Activated CD4-positive, alpha-beta T cell treated with anti-CD3 and anti-CD28 coated beads, Interleukin-2, amount 10 ng/mL, durations not matched to agents 24 days and 14 days (primary cell): ENCODE measurements at regions of chr6 and their contacts with region 1.

Region 1: GRCh38 chr6:100099189-100100074 is 105.4 kb upstream of the MCHR2 start:
- DNase-seq: no peak
- H3K4me3 Mint-ChIP-seq: no peak overlapping the region
- H3K27ac Mint-ChIP-seq: no peak overlapping the region
- H3K4me1 Mint-ChIP-seq: no peaks in the 10 kb centered on the region
- H3K27me3 Mint-ChIP-seq: no peaks in the 10 kb centered on the region

Region 2: DNA sequence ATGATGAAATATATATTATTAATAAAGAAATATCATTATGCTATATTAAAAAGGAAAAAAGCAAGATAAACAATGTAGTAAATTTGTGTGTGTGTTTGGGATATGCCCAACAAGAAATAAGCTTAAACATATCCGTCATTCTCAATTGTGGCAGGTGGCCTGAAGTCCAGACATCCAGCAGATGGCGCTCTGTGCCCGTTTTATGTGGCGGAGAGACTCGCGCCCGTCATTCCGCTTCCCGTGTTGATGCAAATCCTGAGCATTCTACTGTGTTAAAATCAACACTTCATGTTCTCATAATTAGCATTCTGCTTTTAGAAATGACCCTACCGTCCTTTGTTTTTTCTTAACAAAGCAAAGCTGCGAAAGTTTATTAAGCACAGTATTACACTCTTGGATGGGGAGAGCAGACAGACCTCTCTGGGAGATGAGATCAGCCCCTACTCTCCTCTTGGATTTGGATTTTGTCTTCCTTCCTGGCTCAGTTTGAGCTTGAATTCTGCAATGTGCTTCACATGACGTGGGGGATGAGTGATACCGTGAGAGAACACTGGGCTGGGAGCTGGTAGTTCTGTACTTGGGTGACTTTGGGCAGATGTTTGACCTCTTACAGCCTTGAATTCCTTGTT is 231.2 kb before region 1 on chr6:
- intact Hi-C with region 1: loop called (anchors 2 kb)
- DNase-seq: peak; percentile 90
- H3K4me3 Mint-ChIP-seq: no peak overlapping the region
- H3K27ac Mint-ChIP-seq: no peak overlapping the region
- H3K4me1 Mint-ChIP-seq: no peaks in the 10 kb centered on the region
- H3K27me3 Mint-ChIP-seq: peaks cover 20% of the 10 kb centered on the region

Region 3: GRCh38 chr6:100001915-100002388 is 97.5 kb before region 1 on chr6:
- intact Hi-C with region 1: loop called (anchors 1 kb)
- DNase-seq: peak; percentile 78
- H3K4me3 Mint-ChIP-seq: no peak overlapping the region
- H3K27ac Mint-ChIP-seq: no peak overlapping the region
- H3K4me1 Mint-ChIP-seq: no peaks in the 10 kb centered on the region
- H3K27me3 Mint-ChIP-seq: peaks cover 13% of the 10 kb centered on the region